MCF 10A (cell line): ENCODE measurements at regions of chr14 and their contacts with region 1.

Region 1: DNA sequence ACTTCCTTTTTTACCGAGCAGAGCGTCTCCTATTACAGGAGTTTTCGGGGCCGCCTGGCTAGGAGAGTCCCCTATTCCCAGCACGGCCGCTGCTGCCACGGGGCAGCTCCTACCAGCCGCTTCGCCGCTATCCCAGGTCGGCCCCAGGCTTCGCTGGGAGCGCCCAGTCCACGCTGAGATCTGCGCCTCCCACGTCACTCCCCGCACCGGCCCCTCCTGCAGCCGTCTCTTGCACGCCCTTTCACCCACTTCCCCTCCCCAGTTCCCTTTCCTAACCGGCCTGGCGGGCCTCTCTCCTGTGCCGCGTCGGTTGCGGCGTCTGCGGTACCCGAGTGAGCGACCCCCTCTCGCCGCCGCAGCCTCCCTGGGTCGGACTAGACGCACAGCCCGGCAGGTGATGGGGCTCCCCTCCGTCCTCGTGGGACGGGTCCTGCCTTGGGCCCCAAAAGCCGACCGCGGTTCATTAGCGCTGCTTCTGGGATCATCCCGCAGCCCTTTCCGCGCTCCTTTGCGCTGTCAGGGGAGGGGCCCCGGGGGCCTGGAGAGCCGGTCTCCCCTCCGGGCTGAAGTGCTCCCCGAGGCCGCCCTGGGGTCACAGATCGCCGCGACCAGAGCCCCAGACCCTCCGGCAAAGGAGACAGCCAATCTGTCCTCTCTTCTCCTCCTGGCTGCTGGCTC is 1318.4 kb downstream of the TMEM121 start:
- DNase-seq: peak; percentile 42
- H3K4me3 Mint-ChIP-seq: peak overlapping the region; percentile 83
- H3K27ac Mint-ChIP-seq: peak overlapping the region; percentile 95
- H3K4me1 Mint-ChIP-seq: peaks cover 68% of the 10 kb centered on the region
- H3K27me3 Mint-ChIP-seq: no peaks in the 10 kb centered on the region
- CTCF ChIP-seq: no peak

Region 2: GRCh38 chr14:106657460-106657859 is 187.3 kb before region 1 on chr14:
- CTCF ChIA-PET with region 1: no interaction called
- POLR2A ChIA-PET with region 1: no interaction called
- intact Hi-C with region 1: no loop called
- DNase-seq: no peak
- H3K4me3 Mint-ChIP-seq: no peak overlapping the region
- H3K27ac Mint-ChIP-seq: peak overlapping the region; percentile 55
- H3K4me1 Mint-ChIP-seq: peaks cover 10% of the 10 kb centered on the region
- H3K27me3 Mint-ChIP-seq: peaks cover 52% of the 10 kb centered on the region
- CTCF ChIP-seq: no peak

Region 3: GRCh38 chr14:106831322-106831720 is 13.4 kb before region 1 on chr14:
- CTCF ChIA-PET with region 1: interaction called, 45 read pairs
- POLR2A ChIA-PET with region 1: interaction called, 9 read pairs
- intact Hi-C with region 1: no loop called
- DNase-seq: no peak
- H3K4me3 Mint-ChIP-seq: no peak overlapping the region
- H3K27ac Mint-ChIP-seq: peak overlapping the region; percentile 51
- H3K4me1 Mint-ChIP-seq: peaks cover 13% of the 10 kb centered on the region
- H3K27me3 Mint-ChIP-seq: no peaks in the 10 kb centered on the region
- CTCF ChIP-seq: peak; percentile 50